ENCODE measurements at regions of chr7 and their contacts with region 1.

Region 1: DNA sequence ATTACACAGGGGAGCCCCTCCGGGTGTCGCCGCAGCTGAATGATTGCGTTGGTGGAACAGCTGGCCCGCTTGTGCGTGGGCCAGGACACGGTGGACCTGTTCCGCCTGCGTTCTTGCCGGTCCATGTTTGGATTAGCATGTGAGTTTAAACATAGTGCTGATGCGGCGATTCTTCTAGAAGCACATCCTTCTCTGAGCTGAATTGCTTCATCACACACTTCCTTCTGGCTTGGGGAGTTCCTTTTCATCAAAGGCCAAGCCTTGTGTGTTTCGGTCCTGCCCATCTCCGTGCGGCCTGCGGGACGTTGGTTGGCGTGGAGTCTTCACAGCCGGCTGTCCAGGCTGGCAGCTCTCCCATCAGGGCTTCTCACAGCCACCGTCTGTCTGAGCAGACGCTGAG is 45.5 kb upstream of the SLC29A4 start:
- DNase-seq: no peak
- H3K4me3 ChIP-seq: no peak overlapping the region
- H3K27ac ChIP-seq: no peak overlapping the region
- H3K4me1 ChIP-seq: peaks cover 0 to 12% of the 10 kb centered on the region in 2 experiments; a peak in 1 of 4 replicates
- H3K27me3 ChIP-seq: no peaks in the 10 kb centered on the region
- CTCF ChIP-seq: no peak
- EP300 ChIP-seq: no peak
- RAD21 ChIP-seq: no peak

Region 2: GRCh38 chr7:4876586-4876985 is 360.7 kb before region 1 on chr7:
- CTCF ChIA-PET with region 1: no interaction called
- POLR2A ChIA-PET with region 1: no interaction called
- DNase-seq: no peak
- H3K4me3 ChIP-seq: no peak overlapping the region
- H3K27ac ChIP-seq: no peak overlapping the region
- H3K4me1 ChIP-seq: peaks cover 0 to 51% of the 10 kb centered on the region in 2 experiments; a peak in 1 of 4 replicates
- H3K27me3 ChIP-seq: no peaks in the 10 kb centered on the region
- CTCF ChIP-seq: no peak
- EP300 ChIP-seq: no peak
- RAD21 ChIP-seq: no peak

Region 3: DNA sequence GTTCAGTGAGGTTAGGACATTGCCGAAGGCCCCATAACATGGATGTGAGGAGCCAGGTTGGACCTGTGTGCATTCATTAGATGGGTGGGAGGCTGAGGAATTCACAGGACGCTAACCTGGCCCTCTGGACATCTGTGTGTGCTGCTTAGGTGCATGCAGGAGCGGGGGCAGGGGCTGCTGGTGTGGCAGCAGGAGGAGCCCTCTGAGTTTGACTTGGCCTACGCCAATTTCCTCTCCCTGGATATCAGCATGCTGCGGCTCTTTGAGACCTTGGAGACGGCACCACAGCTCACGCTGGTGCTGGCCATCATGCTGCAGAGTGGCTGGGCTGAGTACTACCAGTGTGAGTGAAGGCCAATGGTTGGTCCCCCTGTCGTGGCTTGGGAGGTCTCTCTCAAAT is 243.8 kb before region 1 on chr7:
- CTCF ChIA-PET with region 1: no interaction called
- POLR2A ChIA-PET with region 1: no interaction called
- DNase-seq: no peak
- H3K4me3 ChIP-seq: no peak overlapping the region
- H3K27ac ChIP-seq: no peak overlapping the region
- H3K4me1 ChIP-seq: no peaks in the 10 kb centered on the region
- H3K27me3 ChIP-seq: no peaks in the 10 kb centered on the region
- CTCF ChIP-seq: no peak
- EP300 ChIP-seq: no peak
- RAD21 ChIP-seq: no peak

Region 4: DNA sequence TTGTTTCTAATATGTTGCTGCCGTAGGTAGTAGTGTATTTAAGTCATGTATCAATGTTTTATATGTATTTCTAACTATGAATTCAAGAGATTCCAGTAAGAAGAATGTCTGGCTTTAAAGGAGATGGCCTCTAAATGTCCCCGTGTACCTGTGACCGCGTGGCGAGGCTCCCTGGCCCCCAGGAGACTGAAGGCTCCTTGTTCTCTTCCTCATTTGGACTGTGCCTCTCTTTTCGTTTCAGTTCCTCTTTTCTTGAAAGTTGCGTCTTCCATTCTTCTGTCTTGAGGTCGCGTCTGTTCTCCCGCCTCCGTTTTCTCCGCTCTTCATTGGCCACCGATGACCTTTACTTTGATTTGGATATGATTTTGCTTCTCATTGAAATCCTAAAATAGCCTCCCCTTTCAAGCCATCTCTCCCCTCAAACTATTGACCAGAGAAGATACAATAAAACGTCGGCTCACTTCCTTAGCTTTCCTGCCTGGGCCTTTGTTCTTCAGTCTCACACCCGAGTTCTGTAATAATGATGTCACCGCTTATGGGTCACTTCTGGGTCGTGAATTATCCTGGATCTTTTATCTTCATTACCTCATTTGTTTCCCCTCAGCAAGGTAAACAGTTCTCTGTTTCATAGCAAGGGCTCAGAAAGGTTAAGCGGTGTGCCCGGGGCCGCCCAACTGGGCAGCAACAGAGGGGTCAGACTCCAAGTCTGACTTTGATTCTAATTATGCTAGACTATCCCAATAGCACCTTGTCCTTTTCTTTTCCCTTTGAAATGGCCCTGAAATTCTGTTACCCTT is 18.5 kb before region 1 on chr7:
- CTCF ChIA-PET with region 1: interaction called, 25 read pairs
- POLR2A ChIA-PET with region 1: interaction called, 3 read pairs
- DNase-seq: no peak
- H3K4me3 ChIP-seq: no peak overlapping the region
- H3K27ac ChIP-seq: no peak overlapping the region
- H3K4me1 ChIP-seq: no peaks in the 10 kb centered on the region
- H3K27me3 ChIP-seq: no peaks in the 10 kb centered on the region
- CTCF ChIP-seq: no peak
- EP300 ChIP-seq: no peak
- RAD21 ChIP-seq: no peak

Region 5: DNA sequence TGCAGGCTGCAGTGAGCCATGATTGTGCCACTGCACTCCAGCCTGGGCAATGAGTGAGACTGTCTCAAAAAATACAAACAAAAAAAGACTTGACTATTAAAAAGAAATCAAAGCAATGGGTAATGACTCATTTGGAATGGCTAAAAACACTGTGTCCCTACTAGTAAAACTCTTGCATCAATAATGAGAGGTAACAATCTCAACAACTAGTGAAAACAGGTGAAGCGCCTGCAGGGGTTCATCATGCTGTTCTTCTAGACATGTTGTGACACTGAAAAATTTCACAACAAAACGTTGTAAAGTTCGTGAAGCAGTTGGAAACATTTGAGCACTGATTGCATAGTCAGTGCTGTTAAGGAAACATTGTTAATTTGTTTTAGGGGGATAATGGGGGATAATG is 18.5 kb after region 1 on chr7:
- CTCF ChIA-PET with region 1: interaction called, 42 read pairs
- POLR2A ChIA-PET with region 1: no interaction called
- DNase-seq: no peak
- H3K4me3 ChIP-seq: no peak overlapping the region
- H3K27ac ChIP-seq: no peak overlapping the region
- H3K4me1 ChIP-seq: peaks cover 0 to 6% of the 10 kb centered on the region in 2 experiments; a peak in 1 of 4 replicates
- H3K27me3 ChIP-seq: no peaks in the 10 kb centered on the region
- CTCF ChIP-seq: no peak
- EP300 ChIP-seq: no peak
- RAD21 ChIP-seq: no peak

Region 6: GRCh38 chr7:5278766-5279165 is 41.5 kb after region 1 on chr7:
- CTCF ChIA-PET with region 1: interaction called, 113 read pairs
- POLR2A ChIA-PET with region 1: interaction called, 25 read pairs
- DNase-seq: no peak
- H3K4me3 ChIP-seq: no peak overlapping the region
- H3K27ac ChIP-seq: no peak overlapping the region
- H3K4me1 ChIP-seq: peaks cover 0 to 26% of the 10 kb centered on the region in 2 experiments; a peak in 1 of 4 replicates
- H3K27me3 ChIP-seq: peaks cover 7% of the 10 kb centered on the region; the same call in 1 of the 2 replicates
- CTCF ChIP-seq: no peak
- EP300 ChIP-seq: no peak
- RAD21 ChIP-seq: no peak

Region 7: GRCh38 chr7:5330288-5330687 is 93.0 kb after region 1 on chr7:
- CTCF ChIA-PET with region 1: interaction called, 13 read pairs
- POLR2A ChIA-PET with region 1: no interaction called
- DNase-seq: no peak
- H3K4me3 ChIP-seq: no peak overlapping the region
- H3K27ac ChIP-seq: no peak overlapping the region
- H3K4me1 ChIP-seq: peaks cover 0 to 6% of the 10 kb centered on the region in 2 experiments; a peak in 1 of 4 replicates
- H3K27me3 ChIP-seq: no peaks in the 10 kb centered on the region
- CTCF ChIP-seq: no peak
- EP300 ChIP-seq: no peak
- RAD21 ChIP-seq: no peak

Region 8: GRCh38 chr7:5363729-5364128 is 126.4 kb after region 1 on chr7:
- CTCF ChIA-PET with region 1: interaction called, 39 read pairs
- POLR2A ChIA-PET with region 1: no interaction called
- DNase-seq: no peak
- H3K4me3 ChIP-seq: no peak overlapping the region
- H3K27ac ChIP-seq: no peak overlapping the region
- H3K4me1 ChIP-seq: no peaks in the 10 kb centered on the region
- H3K27me3 ChIP-seq: no peaks in the 10 kb centered on the region
- CTCF ChIP-seq: no peak
- EP300 ChIP-seq: no peak
- RAD21 ChIP-seq: no peak

Region 9: DNA sequence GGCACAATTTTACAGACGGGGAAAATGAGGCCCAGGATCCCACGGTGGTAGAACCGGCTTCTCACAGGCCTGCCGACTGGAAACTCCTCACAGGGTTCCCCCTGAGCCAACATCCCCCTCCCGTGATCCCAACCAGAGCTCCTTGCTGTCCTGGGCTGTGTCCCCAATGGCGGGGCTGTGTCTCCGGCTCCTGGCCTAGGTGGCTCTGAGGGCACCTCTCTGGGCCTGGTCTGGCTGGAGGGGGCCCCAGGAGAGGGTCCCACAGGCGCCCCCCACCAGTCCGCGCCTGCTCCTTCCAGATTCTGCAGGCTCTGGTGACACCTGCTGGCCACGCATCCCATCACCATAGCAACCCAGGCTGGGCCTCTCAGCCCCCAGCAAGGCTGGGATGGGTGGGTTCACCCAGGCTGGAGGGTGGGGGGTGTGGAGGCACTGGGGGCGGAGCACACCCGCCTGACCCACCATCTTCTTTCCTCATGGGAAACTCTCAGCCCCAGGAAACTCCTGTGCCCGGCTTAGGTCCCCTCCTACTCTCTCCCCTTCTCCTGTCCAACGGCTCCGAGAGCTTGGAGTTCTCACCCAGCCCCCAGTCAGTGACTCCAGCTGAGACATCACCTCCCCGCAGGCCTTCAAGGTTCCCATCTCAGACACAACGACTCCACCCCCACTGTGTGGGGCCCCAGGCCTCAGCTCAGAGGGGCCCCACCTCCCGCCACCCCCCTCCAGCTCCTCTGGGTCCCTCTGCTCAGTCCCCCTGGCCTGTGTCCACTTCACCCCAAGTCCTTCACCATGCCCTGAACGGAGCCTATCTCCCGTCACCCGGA is 213.5 kb after region 1 on chr7:
- CTCF ChIA-PET with region 1: interaction called, 73 read pairs
- POLR2A ChIA-PET with region 1: no interaction called
- DNase-seq: peak; percentile 94
- H3K4me3 ChIP-seq: no peak overlapping the region; a peak in 1 of 4 replicates
- H3K27ac ChIP-seq: no peak overlapping the region
- H3K4me1 ChIP-seq: peaks cover 0 to 3% of the 10 kb centered on the region in 2 experiments; a peak in 1 of 4 replicates
- H3K27me3 ChIP-seq: no peaks in the 10 kb centered on the region
- CTCF ChIP-seq: peak; percentile 78
- EP300 ChIP-seq: no peak
- RAD21 ChIP-seq: peak; percentile 85

Measured in SK-N-SH (cell line).